Ovary (tissue), 10 donors: ENCODE measurements at regions of chr12 and their contacts with region 1.

Region 1: GRCh38 chr12:65343801-65344200 is 65.3 kb downstream of the MSRB3 start:
- DNase-seq: no peak
- H3K4me3 ChIP-seq: no peak overlapping the region
- H3K27ac ChIP-seq: no peak overlapping the region
- H3K4me1 ChIP-seq: no peaks in the 10 kb centered on the region
- H3K27me3 ChIP-seq: no peaks in the 10 kb centered on the region
- CTCF ChIP-seq: no peak
- EP300 ChIP-seq: no peak
- POLR2A ChIP-seq: no peak

Region 2: GRCh38 chr12:65238609-65239008 is 105.2 kb before region 1 on chr12:
- intact Hi-C with region 1: no loop called
- DNase-seq: no peak
- H3K4me3 ChIP-seq: no peak overlapping the region
- H3K27ac ChIP-seq: no peak overlapping the region
- H3K4me1 ChIP-seq: no peaks in the 10 kb centered on the region
- H3K27me3 ChIP-seq: no peaks in the 10 kb centered on the region
- CTCF ChIP-seq: no peak
- EP300 ChIP-seq: no peak
- POLR2A ChIP-seq: no peak

Region 3: DNA sequence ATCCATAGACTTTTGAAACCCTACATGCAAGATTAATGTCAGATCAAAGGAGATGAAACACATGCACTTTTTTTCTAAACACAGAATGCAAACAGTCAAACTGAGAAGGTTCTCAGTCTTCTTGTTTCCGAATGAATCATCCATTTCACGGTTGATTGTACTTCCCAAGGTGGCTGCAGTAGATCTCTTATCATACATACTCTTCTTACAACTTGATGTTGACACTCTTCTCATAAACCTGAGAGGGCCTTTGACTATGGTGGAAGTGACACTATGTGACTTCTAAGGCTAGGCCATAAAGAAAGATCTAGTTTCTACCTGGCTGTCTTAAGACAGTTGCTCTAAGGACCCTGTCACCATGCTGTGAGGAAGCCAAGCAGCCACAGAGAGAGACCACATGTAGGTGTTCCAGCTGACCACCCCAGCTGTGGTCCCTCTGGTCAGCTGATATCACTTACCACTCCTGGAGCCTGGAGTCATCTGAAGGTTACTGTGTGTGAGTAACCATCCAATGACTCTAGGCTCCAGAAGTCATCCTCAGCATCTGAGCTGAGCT is 413.2 kb after region 1 on chr12:
- intact Hi-C with region 1: no loop called
- DNase-seq: no peak
- H3K4me3 ChIP-seq: no peak overlapping the region
- H3K27ac ChIP-seq: no peak overlapping the region
- H3K4me1 ChIP-seq: no peaks in the 10 kb centered on the region
- H3K27me3 ChIP-seq: no peaks in the 10 kb centered on the region
- CTCF ChIP-seq: no peak
- EP300 ChIP-seq: no peak
- POLR2A ChIP-seq: no peak

Region 4: GRCh38 chr12:67155863-67156262 is 1812.1 kb after region 1 on chr12:
- intact Hi-C with region 1: loop called in 1 of 4 experiments (anchors 10 kb)
- DNase-seq: no peak
- H3K4me3 ChIP-seq: no peak overlapping the region
- H3K27ac ChIP-seq: no peak overlapping the region
- H3K4me1 ChIP-seq: no peaks in the 10 kb centered on the region
- H3K27me3 ChIP-seq: no peaks in the 10 kb centered on the region
- CTCF ChIP-seq: no peak
- EP300 ChIP-seq: no peak
- POLR2A ChIP-seq: no peak